ENCODE measurements at regions of chr2 and their contacts with region 1.

Region 1: GRCh38 chr2:71372042-71372441 is 40.5 kb downstream of the ZNF638 start:
- DNase-seq: no peak
- ATAC-seq: no peak
- H3K4me3 ChIP-seq: no peak overlapping the region
- H3K27ac ChIP-seq: no peak overlapping the region
- H3K4me1 ChIP-seq: no peaks in the 10 kb centered on the region
- H3K27me3 ChIP-seq: no peaks in the 10 kb centered on the region
- CTCF ChIP-seq: no peak

Region 2: DNA sequence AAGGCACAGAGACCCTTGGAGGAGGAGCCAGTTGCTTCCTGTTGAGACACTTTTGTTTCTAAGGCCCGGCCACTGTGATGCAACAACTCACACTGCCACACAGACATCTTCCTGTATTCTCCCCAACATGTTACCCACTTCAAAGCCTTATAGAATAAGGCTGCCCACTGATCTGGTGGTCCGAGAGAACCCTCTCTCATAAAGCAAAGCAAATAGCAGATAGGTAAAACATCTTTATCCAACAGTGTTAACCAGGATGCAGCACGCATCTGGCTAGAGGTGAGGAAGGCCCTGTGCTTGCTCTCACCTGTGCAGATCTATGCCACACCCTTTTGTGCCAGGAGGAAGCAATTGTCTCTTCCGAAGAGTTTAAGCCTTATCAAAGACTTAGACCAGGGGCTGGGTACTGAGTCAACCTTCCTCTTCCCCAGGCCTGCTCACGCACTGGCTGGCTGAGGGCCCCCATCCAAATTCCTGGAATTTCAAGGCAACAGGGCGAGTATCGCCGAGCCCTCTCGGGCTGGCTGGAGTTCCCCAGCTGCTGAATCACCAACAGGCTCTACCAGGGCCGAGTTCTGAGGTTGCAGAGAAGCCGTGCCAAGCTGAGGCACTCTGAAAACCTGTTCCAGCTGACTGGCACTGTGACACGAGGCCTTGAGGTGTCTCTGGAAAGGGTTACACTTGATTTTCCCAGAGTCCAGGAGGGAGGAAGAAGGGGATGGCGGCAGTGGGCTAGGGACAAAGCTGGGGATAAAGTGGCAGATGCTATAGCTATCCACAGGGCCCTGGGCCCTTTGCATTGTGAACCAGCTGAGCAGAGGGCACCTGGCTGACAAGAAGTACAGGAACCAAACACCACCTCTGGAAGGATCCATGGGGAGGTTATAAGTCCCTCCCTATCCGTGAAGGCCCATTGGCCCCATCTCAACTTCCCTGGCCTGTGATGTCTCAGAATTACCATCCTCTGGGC is 847.8 kb before region 1 on chr2:
- CTCF ChIA-PET with region 1: no interaction called
- POLR2A ChIA-PET with region 1: no interaction called
- in situ Hi-C with region 1: no loop called
- intact Hi-C with region 1: no loop called
- DNase-seq: no peak
- ATAC-seq: peak; percentile 87
- H3K4me3 ChIP-seq: no peak overlapping the region
- H3K27ac ChIP-seq: no peak overlapping the region
- H3K4me1 ChIP-seq: no peaks in the 10 kb centered on the region
- H3K27me3 ChIP-seq: peaks cover 5% of the 10 kb centered on the region
- CTCF ChIP-seq: no peak

Region 3: DNA sequence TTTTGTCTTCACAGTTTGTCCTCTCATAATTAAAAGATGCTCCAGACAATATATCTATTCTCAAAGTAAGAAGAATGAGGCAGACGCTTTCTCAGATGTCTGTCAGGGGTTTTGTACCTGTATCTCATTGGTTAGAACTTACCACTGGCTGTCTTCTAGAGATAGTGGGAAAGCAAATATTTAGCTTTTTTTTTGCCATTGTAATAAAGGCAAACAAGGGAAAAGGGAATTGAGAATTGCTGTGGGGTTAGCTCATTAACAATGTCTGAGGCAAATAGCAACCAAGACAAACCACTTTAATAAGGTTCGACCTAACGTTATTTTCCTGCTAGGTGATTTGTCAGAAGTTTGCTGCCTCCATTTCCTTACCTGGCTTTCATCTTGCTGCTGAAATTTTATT is 10.4 kb before region 1 on chr2:
- CTCF ChIA-PET with region 1: no interaction called
- POLR2A ChIA-PET with region 1: interaction called, 13 read pairs
- in situ Hi-C with region 1: no loop called
- intact Hi-C with region 1: no loop called
- DNase-seq: no peak
- ATAC-seq: no peak
- H3K4me3 ChIP-seq: no peak overlapping the region
- H3K27ac ChIP-seq: no peak overlapping the region
- H3K4me1 ChIP-seq: no peaks in the 10 kb centered on the region
- H3K27me3 ChIP-seq: no peaks in the 10 kb centered on the region
- CTCF ChIP-seq: no peak

Region 4: GRCh38 chr2:71389384-71390072 is 17.5 kb after region 1 on chr2:
- CTCF ChIA-PET with region 1: interaction called, 6 read pairs
- POLR2A ChIA-PET with region 1: interaction called, 13 read pairs
- in situ Hi-C with region 1: no loop called
- intact Hi-C with region 1: no loop called
- DNase-seq: no peak
- ATAC-seq: no peak
- H3K4me3 ChIP-seq: no peak overlapping the region
- H3K27ac ChIP-seq: no peak overlapping the region
- H3K4me1 ChIP-seq: no peaks in the 10 kb centered on the region
- H3K27me3 ChIP-seq: no peaks in the 10 kb centered on the region
- CTCF ChIP-seq: no peak

Region 5: DNA sequence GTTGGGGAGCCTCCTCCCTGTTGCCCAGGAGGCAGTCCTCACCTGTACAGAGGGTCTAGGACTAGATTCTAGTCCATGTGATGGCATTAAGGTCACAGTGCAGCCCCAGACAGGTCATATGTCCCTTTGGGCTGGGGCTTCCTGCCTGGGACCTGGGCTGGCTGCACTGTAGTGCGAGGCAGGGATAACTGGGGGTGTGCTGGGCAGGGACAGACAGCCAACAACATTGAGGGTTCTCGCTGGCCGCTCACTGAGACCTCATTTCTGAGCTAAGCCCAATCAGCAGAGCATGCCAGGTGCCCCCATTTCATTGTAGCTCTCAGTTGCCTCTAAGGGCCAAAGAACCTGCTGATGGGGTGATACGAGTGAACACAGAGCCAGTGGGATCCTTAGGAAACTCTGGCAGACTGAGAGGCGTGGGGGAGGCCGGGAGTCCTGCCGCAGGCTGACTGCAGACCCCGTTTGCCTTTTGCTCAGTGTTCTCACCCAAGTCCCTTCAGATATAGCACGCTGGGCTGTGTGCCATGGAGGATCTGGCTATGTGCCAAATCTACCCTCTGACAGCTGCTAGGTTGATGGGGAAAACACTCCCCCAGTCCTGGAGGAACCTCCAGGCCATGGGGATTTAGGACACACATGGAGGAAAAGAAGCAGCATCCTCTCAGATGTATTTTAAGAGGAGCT is 133.2 kb after region 1 on chr2:
- CTCF ChIA-PET with region 1: no interaction called
- POLR2A ChIA-PET with region 1: no interaction called
- in situ Hi-C with region 1: no loop called
- intact Hi-C with region 1: no loop called
- DNase-seq: no peak
- ATAC-seq: no peak
- H3K4me3 ChIP-seq: no peak overlapping the region
- H3K27ac ChIP-seq: no peak overlapping the region
- H3K4me1 ChIP-seq: no peaks in the 10 kb centered on the region
- H3K27me3 ChIP-seq: no peaks in the 10 kb centered on the region
- CTCF ChIP-seq: no peak

Region 6: DNA sequence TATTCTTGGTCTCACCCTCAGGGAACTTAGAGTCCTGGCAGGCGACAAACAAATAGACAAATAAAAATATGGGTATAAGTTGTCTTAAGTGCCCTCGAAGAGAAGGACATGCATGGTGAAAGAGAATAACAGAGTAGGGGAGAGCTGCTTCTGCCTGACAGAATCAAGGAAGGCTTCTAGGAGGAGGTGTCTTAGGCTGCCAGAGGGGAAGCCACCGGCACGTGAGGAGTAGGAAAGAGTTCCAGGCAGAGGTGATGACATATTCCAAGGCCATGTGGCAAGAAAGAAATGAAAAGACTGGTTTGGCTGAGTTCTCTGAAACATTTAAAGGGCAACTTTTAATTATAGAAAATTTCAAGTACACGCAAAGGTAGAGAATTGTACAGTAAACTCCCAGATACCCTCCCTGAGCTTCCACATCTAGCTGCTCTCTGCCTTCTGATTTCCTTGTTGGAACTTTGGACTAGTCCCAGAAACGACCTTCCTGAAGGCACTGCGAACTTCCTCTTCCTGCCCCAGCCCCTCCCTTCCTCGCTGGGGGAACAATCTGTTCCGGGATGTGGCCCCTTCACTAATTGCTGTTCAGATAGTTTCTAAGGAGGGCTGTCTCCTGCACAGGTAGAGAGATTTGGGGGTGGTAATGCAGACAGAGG is 173.0 kb after region 1 on chr2:
- CTCF ChIA-PET with region 1: no interaction called
- POLR2A ChIA-PET with region 1: no interaction called
- in situ Hi-C with region 1: no loop called
- intact Hi-C with region 1: no loop called
- DNase-seq: no peak
- ATAC-seq: peak; percentile 29; the same call in 1 of the 2 replicates
- H3K4me3 ChIP-seq: peak overlapping the region; percentile 1 to 25; a peak in 3 of 4 replicates
- H3K27ac ChIP-seq: no peak overlapping the region
- H3K4me1 ChIP-seq: no peaks in the 10 kb centered on the region; the same call in 1 of the 2 replicates
- H3K27me3 ChIP-seq: no peaks in the 10 kb centered on the region; the same call in 1 of the 2 replicates
- CTCF ChIP-seq: no peak

Region 7: DNA sequence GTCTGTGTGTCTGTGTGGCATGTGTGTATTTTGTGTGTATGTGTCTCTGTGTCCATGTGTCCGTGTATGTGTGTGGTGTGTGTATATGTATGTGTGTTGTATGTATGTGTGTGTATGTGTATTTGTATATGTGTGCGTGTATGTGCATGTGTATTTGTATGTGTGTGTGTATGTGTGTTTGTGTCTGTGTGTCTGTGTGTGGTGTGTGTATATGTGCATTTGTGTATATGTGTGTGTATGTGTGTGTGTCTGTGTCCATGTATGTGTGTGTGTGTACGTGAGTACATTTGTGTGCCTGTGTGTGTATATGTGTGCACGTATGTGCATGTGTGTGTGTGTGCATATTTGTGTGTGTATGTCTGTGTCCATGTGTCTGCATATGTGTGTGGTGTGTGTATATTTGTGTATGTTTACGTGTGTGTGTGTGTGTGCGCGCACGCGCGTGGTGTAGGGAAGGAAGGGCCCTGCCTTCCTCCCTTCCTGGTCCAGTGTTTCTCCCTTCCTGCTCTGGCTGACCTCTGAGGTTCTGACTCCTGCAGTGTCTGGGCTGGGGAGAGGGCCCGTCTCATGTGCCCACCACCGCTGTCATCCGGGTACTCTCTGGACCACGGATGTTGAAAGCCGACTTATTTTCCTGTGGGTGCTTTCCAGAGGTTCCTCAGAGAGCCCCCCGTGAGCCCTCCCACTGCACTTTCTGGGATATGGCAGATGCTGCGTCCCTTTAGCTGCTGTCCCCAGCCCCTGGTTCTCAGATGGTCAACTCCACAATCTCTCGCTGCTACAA is 290.8 kb after region 1 on chr2:
- CTCF ChIA-PET with region 1: no interaction called
- POLR2A ChIA-PET with region 1: no interaction called
- in situ Hi-C with region 1: no loop called
- intact Hi-C with region 1: no loop called
- DNase-seq: no peak
- ATAC-seq: no peak
- H3K4me3 ChIP-seq: no peak overlapping the region
- H3K27ac ChIP-seq: no peak overlapping the region
- H3K4me1 ChIP-seq: no peaks in the 10 kb centered on the region
- H3K27me3 ChIP-seq: no peaks in the 10 kb centered on the region
- CTCF ChIP-seq: no peak

Measured in Panc1 (cell line).